HCT116 (cell line): ENCODE measurements at regions of chr12 and their contacts with region 1.

Region 1: DNA sequence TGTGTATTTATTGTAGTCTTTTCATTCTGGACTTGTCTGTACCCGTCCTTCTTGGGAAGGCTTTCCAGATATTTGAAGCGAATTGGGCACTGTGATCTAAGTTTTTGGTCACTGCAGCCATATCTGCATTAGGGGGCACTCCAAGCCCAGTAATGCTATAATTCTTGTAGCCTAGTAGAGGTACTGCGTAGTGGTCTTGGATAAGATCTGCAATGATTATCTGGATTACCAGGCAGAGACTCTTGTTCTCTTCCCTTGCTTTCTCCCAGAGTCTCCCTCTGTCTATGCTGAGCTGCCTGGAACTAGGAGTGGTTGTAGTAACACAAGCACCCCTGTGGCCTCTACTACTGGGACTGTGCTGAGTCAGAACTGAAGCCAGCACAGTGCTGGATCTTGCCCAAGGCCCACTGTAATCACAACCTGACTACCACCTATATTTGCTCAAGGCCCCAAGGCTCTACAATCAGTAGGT is 30.0 kb downstream of the SLC38A2 start:
- DNase-seq: peak; percentile 56
- ATAC-seq: peak; percentile 94
- H3K4me3 ChIP-seq: no peak overlapping the region
- H3K27ac ChIP-seq: no peak overlapping the region
- H3K4me1 ChIP-seq: peaks cover 3 to 11% of the 10 kb centered on the region in 2 experiments; a peak in 3 of 4 replicates
- H3K27me3 ChIP-seq: no peaks in the 10 kb centered on the region
- CTCF ChIP-seq: peak; percentile 61 to 82 (median 78); a peak in 5 of 6 replicates
- POLR2A ChIP-seq: no peak
- RAD21 ChIP-seq: peak; percentile 93

Region 2: DNA sequence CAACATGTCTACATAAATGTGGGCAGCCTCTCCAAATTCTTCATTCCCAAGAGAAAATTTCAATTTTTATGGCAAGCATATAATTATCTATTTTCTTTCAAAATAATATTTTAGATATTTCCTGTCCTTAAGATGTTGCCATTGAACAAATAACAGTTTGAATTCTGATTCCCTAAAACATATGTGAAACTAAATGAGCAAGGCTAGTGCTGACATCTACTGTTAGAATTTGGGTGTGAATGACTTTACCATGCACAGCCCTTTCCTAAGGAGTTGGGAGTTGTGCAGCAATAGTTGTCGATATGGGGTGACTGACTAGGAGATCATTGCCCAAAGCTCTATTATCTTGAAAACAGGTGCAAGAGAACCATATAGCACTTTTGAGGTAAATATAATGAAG is 591.3 kb after region 1 on chr12:
- CTCF ChIA-PET with region 1: no interaction called
- POLR2A ChIA-PET with region 1: no interaction called
- RAD21 ChIA-PET with region 1: no interaction called
- intact Hi-C with region 1: loop called (anchors 2 kb)
- DNase-seq: no peak
- ATAC-seq: peak; percentile 82
- H3K4me3 ChIP-seq: no peak overlapping the region
- H3K27ac ChIP-seq: no peak overlapping the region
- H3K4me1 ChIP-seq: peaks cover 5 to 9% of the 10 kb centered on the region in 2 experiments; a peak in 2 of 4 replicates
- H3K27me3 ChIP-seq: no peaks in the 10 kb centered on the region
- CTCF ChIP-seq: peak; percentile 40 to 62 (median 48); a peak in 5 of 6 replicates
- POLR2A ChIP-seq: no peak
- RAD21 ChIP-seq: peak; percentile 79

Region 3: DNA sequence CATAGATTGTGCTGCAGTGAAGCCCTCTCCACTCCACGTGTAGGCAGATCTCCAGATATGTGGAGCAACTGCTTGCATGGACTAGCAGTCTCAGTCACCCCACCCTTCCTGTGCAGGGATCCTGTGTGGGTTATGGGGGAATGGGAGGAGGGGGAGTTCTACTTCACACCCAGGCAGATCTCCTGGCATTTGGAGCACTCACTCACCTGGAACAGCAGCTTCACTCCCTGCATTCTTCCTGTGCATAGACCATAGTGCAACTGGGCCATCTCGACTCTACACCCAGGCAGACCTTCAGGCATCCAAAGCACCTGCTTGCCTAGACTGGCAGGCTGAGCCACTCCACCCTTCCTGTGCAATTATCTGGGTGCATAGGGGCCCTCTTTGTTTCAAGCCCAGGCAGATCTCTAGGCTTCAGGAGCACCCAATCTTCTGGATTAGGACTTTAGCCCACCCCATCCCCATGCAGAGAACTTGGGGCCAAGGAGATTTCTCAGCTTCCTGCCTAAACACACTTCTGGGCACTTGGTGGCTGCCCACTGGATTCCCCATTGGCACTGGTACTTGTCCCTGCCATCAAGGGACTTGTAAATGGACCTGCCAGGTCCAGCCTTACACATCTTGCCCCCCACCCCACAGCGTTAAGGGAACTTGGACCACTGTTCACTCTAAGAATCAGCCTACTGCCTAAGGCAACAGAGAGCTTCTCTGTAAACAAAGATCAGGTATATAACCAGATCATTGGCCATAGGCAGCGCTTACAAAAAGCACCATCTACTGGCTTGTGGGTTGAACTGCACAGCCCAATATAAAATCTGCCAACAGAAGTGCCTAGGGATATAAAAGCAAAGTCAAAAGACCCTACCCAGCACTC is 641.0 kb after region 1 on chr12:
- CTCF ChIA-PET with region 1: no interaction called
- POLR2A ChIA-PET with region 1: no interaction called
- RAD21 ChIA-PET with region 1: no interaction called
- intact Hi-C with region 1: loop called (anchors 1 kb)
- DNase-seq: peak; percentile 56
- ATAC-seq: peak; percentile 97
- H3K4me3 ChIP-seq: no peak overlapping the region
- H3K27ac ChIP-seq: no peak overlapping the region
- H3K4me1 ChIP-seq: no peaks in the 10 kb centered on the region
- H3K27me3 ChIP-seq: no peaks in the 10 kb centered on the region
- CTCF ChIP-seq: peak; percentile 78 to 88 (median 84)
- POLR2A ChIP-seq: no peak
- RAD21 ChIP-seq: peak; percentile 89

Region 4: DNA sequence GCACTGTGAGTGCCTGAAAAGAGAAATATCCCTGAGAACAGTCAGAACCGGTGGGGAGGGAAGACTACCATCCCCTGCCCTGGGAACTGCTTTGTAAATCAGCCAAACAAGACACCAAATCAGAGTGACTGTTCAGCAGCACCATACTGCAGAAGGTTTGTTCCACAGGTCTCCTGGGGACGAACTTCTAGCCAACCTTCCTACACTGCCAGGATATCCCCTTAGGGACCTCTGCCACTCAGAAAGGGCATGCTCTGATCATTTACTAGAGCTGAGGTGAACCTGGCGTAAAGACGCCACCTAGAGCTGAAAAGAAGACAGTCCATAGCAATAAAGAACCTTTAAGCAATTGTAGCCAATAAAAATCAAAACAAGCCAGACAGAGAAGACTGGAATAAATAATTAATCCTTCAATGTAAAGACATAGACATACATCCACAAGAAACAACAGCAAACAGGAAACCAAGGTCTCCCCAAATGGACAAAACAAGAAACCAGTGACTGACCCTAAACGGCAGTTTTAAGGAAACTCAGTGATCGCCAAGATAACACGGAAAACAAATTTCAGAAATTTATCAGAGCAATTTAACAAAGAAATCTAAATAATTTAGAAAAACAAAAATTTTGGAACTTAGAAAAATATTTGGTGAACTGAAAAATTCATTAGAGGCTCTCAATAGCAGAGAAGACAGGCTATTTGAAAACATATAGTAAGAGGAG is 965.2 kb after region 1 on chr12:
- CTCF ChIA-PET with region 1: no interaction called
- POLR2A ChIA-PET with region 1: no interaction called
- RAD21 ChIA-PET with region 1: no interaction called
- intact Hi-C with region 1: loop called (anchors 10 kb)
- DNase-seq: peak; percentile 49
- ATAC-seq: peak; percentile 100
- H3K4me3 ChIP-seq: no peak overlapping the region
- H3K27ac ChIP-seq: no peak overlapping the region
- H3K4me1 ChIP-seq: peaks cover 0 to 3% of the 10 kb centered on the region in 2 experiments; a peak in 1 of 4 replicates
- H3K27me3 ChIP-seq: no peaks in the 10 kb centered on the region
- CTCF ChIP-seq: peak; percentile 70 to 84 (median 79)
- POLR2A ChIP-seq: no peak
- RAD21 ChIP-seq: peak; percentile 95

Region 5: DNA sequence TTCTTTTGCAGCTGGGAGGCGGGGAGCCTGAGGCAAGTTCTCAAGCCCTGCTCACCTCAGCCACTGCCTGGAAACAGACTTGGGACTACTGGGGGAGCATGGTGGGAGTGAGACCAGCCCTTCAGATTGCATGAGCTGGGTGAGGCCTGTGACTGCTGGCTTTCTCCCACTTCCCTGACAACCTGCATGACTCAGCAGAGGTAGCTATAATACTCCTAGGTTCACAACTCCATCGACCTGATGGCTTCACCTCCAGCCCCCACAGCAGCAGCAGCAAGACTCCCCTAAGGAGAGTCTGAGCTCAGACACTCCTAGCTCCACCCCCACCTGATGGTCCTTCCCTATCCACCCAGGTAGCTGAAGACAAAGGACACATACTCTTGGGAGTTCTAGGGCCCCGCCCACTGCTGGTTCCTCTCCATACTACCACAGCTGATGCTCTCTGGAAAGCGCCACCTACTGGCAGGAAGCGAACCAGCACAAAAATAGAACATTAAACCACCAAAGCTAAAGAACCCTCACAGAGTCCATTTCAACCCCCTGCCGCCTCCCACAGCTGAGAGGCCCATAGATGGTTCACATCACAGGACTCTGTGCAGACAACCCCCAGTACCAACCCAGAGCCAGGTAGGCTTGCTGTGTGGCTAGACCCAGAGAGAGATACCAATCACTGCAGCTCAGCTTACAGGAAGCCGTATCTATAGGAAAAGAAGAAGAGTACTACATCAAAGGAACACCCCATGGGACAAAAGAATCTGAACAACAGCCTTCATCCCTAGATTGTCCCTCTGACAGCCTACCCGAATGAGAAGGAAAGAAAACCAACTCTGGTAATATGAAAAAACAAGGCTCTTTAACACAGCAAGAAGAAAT is 1294.5 kb after region 1 on chr12:
- CTCF ChIA-PET with region 1: no interaction called
- POLR2A ChIA-PET with region 1: no interaction called
- RAD21 ChIA-PET with region 1: no interaction called
- intact Hi-C with region 1: loop called (anchors 5 kb)
- DNase-seq: peak; percentile 69
- ATAC-seq: peak; percentile 98
- H3K4me3 ChIP-seq: no peak overlapping the region
- H3K27ac ChIP-seq: peak overlapping the region; percentile 52
- H3K4me1 ChIP-seq: peaks cover 7 to 12% of the 10 kb centered on the region in 2 experiments; a peak in 3 of 4 replicates
- H3K27me3 ChIP-seq: no peaks in the 10 kb centered on the region
- CTCF ChIP-seq: peak; percentile 62 to 88 (median 84)
- POLR2A ChIP-seq: no peak
- RAD21 ChIP-seq: peak; percentile 48; the same call in 1 of the 2 replicates

Region 6: GRCh38 chr12:47686645-47687240 is 1344.1 kb after region 1 on chr12:
- CTCF ChIA-PET with region 1: no interaction called
- POLR2A ChIA-PET with region 1: no interaction called
- RAD21 ChIA-PET with region 1: no interaction called
- intact Hi-C with region 1: loop called (anchors 10 kb)
- DNase-seq: peak; percentile 18
- ATAC-seq: peak; percentile 75
- H3K4me3 ChIP-seq: no peak overlapping the region
- H3K27ac ChIP-seq: no peak overlapping the region
- H3K4me1 ChIP-seq: no peaks in the 10 kb centered on the region
- H3K27me3 ChIP-seq: no peaks in the 10 kb centered on the region
- CTCF ChIP-seq: peak; percentile 62 to 66 (median 63); a peak in 5 of 6 replicates
- POLR2A ChIP-seq: no peak
- RAD21 ChIP-seq: peak; percentile 73